Activated B cell treated with CpG ODN at 0.5 μM for 24 hours (primary cell): ENCODE measurements at regions of chr17 and their contacts with region 1.

Region 1: DNA sequence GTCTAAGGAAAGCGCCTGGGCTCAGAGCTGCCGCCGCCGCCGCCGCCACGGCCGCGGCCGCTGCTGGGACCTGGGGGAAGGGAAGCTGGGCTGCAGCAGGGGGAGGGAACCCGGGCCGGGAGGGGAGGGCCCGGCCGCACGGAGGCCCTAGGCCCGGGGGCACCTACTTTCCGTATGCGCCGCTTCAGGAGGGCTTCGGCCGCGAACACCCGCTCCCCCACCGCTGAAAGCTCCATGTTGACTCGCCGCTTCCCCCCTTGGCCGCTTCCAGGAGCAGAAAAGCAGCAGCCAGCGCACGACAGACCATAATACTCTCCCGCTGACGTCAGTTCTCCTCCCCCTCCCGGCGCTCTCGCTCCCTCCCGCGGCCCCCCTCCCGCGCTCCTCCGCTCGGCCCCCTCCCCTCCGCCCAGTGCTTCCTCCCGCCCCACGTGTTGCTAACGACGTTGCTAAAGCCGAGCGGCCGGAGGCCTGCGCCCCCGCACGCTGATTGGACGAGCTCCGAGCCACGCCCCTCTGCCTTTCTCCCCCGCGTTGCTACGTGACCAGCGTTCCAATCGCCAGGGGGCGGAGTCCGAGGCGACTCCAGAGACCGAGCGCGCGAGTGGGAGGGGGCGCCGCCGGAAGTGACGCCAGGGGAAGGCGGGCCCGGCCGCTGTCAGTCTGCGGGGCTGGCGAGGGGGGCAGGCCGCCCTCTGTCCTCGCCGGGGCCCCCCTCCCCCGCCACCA is at the start of gene CBX8:
- DNase-seq: peak; percentile 95
- ATAC-seq: peak; percentile 88
- H3K4me3 Mint-ChIP-seq: peak within 1 kb of the TSS; percentile 85
- H3K27ac Mint-ChIP-seq: peak within 1 kb of the TSS; percentile 87
- H3K4me1 Mint-ChIP-seq: peaks cover 34% of the 10 kb centered on the region
- H3K27me3 Mint-ChIP-seq: peaks cover 32% of the 10 kb centered on the region
- CTCF ChIP-seq: no peak
- total RNA-seq, gene CBX8: 4.0 and 4.9 TPM in 2 replicates

Region 2: DNA sequence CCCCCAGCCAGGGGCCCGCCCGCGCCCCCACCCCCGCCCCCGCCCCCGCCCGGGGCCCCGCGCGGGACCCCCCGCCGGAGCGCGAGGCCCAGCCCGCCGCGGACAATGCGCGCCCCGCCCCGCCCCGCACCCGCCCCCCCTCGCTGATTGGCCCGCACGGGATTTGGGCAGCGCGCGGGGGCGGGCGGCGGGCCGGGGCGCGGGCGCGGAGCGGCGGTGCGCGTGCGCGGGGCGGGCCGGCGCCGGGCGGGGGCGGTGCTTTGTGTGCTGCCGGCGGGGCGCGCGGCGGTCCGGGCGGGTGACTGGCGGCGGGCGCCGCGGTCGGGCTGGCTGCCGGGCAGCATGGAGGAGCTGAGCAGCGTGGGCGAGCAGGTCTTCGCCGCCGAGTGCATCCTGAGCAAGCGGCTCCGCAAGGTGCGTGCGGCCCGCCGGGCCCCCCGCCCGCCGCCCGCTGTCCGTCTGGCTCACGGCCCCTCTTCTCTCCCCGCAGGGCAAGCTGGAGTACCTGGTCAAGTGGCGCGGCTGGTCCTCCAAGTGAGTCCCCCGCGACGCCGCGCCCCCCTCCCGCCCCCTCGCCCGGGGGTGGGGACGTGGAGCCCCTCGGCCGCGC is 18.9 kb before region 1 on chr17 and contains the start of gene CBX2:
- CTCF ChIA-PET with region 1: interaction called, 3 read pairs
- POLR2A ChIA-PET with region 1: interaction called, 6 read pairs
- intact Hi-C with region 1: loop called (anchors 2 kb)
- DNase-seq: peak; percentile 83
- ATAC-seq: peak; percentile 93
- H3K4me3 Mint-ChIP-seq: peak within 1 kb of the TSS; percentile 82
- H3K27ac Mint-ChIP-seq: no peak within 1 kb of the TSS
- H3K4me1 Mint-ChIP-seq: peaks cover 14% of the 10 kb centered on the region
- H3K27me3 Mint-ChIP-seq: peaks cover 65% of the 10 kb centered on the region
- CTCF ChIP-seq: no peak
- total RNA-seq, gene CBX2: 0.37 and 0.67 TPM in 2 replicates

Region 3: DNA sequence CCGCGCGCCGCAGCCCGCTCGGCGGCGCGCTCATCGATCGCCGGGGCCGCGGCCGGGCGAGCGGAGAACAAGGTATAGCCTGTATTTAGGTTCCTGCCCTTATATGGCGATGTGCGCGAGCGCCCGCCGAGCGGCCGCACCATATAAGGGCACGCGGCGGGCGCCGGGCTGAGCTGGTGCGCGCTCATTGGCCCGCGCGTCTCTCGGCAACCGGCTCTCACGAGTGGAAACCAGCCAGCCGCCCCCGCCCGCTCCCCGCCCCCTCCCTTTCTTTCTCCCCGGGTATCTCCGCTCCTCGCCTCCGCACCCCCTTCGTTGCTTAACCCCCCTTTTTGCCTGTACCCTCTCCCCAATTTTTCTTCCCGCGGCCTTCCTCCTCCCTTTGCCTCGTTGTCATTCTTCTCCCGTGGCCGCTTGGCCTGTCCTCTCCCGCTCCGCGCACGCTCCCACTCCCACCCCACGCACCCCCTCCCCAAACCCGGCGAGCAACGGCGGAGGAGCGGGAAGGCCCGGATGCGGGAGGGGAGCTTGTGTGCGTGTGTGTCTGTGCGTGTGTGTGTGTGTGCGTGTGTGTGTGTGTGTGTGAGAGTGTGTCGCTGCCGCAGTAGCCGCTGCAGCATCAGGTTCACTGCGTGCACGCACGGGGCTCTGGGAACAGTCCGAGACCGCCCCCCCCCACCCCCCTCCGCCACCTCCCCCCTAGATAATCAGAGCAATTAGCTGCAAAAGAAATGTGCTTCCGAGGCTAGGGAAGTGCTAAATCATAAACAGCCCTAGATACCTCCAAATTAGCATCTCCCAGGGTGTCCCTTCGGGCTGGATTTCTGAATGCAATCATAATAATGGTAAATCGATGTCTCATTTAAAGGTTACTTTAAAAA is 13.4 kb after region 1 on chr17:
- CTCF ChIA-PET with region 1: interaction called, 3 read pairs
- POLR2A ChIA-PET with region 1: interaction called, 12 read pairs
- intact Hi-C with region 1: loop called (anchors 1 kb)
- DNase-seq: no peak
- ATAC-seq: peak; percentile 86
- H3K4me3 Mint-ChIP-seq: peak overlapping the region; percentile 15
- H3K27ac Mint-ChIP-seq: peak overlapping the region; percentile 46
- H3K4me1 Mint-ChIP-seq: peaks cover 36% of the 10 kb centered on the region
- H3K27me3 Mint-ChIP-seq: peaks cover 51% of the 10 kb centered on the region
- CTCF ChIP-seq: no peak

Region 4: DNA sequence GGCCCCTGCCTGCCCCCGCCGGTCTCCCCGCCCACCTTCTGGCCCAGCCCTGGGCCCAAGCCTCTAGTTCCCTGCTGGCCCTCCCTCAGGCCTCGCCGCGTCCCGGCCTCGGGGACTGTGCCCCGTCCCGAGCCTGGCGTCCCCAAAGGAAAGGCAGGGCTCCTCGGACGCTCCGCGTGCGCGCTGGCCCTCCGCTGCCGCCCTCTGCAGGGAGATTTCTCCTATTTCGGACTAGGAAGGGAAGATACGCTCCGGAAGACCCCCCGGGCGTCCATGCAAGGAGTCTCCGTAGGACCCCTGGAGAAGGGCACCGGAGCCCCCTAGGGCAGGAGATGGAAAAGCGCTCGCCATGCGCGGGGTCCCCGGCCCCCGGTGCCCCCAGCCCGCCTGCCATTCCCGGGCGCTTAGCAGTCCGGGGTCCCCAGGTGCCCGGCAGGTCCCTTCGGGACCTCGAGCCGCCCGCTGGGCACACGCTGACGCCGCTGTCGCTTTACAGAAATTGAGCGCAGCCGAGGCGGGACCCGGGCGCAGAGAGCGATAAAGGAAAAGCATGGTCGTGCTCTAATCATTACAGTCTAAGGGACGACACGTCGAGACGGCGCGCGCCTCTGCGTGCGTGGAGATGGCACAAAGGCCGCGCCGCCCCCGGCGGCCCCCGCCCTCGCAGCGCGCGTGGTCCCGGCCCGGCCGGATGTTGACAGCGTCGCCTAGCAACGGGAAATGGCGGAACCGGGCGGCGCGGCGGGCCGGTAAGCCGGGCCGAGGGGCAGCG is 239.2 kb after region 1 on chr17 and contains the start of gene CCDC40:
- CTCF ChIA-PET with region 1: no interaction called
- POLR2A ChIA-PET with region 1: no interaction called
- intact Hi-C with region 1: loop called (anchors 5 kb)
- DNase-seq: peak; percentile 80
- ATAC-seq: peak; percentile 83
- H3K4me3 Mint-ChIP-seq: peak within 1 kb of the TSS; percentile 89
- H3K27ac Mint-ChIP-seq: peak within 1 kb of the TSS; percentile 86
- H3K4me1 Mint-ChIP-seq: peaks cover 15% of the 10 kb centered on the region
- H3K27me3 Mint-ChIP-seq: peaks cover 3% of the 10 kb centered on the region
- CTCF ChIP-seq: no peak
- total RNA-seq, gene CCDC40: 0.46 and 0.55 TPM in 2 replicates